ENCODE measurements at regions of chr22 and their contacts with region 1.

Region 1: GRCh38 chr22:24758164-24758799 is 16.2 kb downstream of the PIWIL3 start:
- H3K4me3 ChIP-seq: no peak overlapping the region
- H3K27ac ChIP-seq: no peak overlapping the region
- H3K4me1 ChIP-seq: no peaks in the 10 kb centered on the region
- CTCF ChIP-seq: peak; percentile 51; the same call in 1 of the 2 replicates

Region 2: GRCh38 chr22:24707470-24707801 is 50.8 kb before region 1 on chr22:
- CTCF ChIA-PET with region 1: interaction called, 27 read pairs
- POLR2A ChIA-PET with region 1: no interaction called
- H3K4me3 ChIP-seq: no peak overlapping the region
- H3K27ac ChIP-seq: no peak overlapping the region
- H3K4me1 ChIP-seq: no peaks in the 10 kb centered on the region
- CTCF ChIP-seq: no peak; the same call in 1 of the 2 replicates

Region 3: DNA sequence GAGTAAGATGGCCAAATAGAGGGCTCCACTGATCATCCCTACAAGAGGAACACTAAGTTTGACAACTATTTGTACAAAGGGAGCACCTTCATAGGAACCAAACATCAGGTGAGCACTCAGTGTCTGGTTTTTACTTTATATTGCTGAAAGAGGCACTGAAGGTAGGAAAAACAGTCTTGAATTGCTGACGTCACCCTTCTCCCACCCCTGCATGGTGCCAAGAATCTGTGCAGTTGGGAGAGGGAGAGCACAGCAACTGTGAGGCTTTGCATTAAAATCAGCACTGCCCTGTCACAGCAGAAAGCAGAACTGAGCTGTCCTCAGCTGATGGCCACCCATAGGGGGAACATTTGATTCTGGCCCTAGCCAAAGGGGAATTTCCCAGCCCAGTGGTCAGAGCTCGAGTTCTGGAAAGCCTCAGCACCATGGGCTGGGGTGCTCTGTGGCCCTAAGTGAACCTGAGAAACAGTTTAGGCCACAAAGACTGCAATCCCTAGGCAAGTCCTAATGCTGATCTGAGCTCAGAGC is 21.7 kb before region 1 on chr22:
- CTCF ChIA-PET with region 1: interaction called, 10 read pairs
- POLR2A ChIA-PET with region 1: no interaction called
- H3K4me3 ChIP-seq: no peak overlapping the region
- H3K27ac ChIP-seq: no peak overlapping the region
- H3K4me1 ChIP-seq: no peaks in the 10 kb centered on the region
- CTCF ChIP-seq: no peak

Measured in HEK293 (cell line).